Ovary (tissue), 10 donors: ENCODE measurements at regions of chr2 and their contacts with region 1.

Region 1: DNA sequence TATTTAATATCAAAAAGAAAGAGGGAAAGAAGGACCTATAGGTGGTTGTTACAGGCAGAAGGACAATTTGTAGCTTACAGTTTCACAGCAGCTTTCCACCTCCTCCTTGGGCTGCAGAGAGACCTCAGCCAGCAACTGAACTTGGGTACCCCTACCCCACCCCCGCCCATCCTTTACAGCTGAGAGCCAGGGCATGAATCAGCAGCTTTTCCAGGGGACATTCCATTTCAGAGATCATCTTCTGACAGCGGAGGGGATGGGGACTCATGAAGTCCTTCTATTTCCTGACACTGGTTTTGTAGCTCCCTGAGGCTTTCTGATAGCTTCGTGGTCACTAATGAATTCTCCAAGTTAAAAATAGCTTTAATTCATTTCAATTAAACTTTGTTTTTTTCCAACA is 96.4 kb downstream of the ITGB1BP1 start:
- DNase-seq: no peak
- H3K4me3 ChIP-seq: no peak overlapping the region
- H3K27ac ChIP-seq: no peak overlapping the region
- H3K4me1 ChIP-seq: peaks cover 4% of the 10 kb centered on the region
- H3K27me3 ChIP-seq: no peaks in the 10 kb centered on the region
- CTCF ChIP-seq: no peak
- EP300 ChIP-seq: no peak
- POLR2A ChIP-seq: no peak

Region 2: GRCh38 chr2:9212661-9213411 is 114.1 kb before region 1 on chr2:
- intact Hi-C with region 1: loop called in 3 of 4 experiments (anchors 5 to 10 kb)
- DNase-seq: no peak
- H3K4me3 ChIP-seq: no peak overlapping the region
- H3K27ac ChIP-seq: no peak overlapping the region
- H3K4me1 ChIP-seq: no peaks in the 10 kb centered on the region
- H3K27me3 ChIP-seq: no peaks in the 10 kb centered on the region
- CTCF ChIP-seq: no peak
- EP300 ChIP-seq: no peak
- POLR2A ChIP-seq: no peak